ENCODE measurements at regions of chr11 and their contacts with region 1.

Region 1: DNA sequence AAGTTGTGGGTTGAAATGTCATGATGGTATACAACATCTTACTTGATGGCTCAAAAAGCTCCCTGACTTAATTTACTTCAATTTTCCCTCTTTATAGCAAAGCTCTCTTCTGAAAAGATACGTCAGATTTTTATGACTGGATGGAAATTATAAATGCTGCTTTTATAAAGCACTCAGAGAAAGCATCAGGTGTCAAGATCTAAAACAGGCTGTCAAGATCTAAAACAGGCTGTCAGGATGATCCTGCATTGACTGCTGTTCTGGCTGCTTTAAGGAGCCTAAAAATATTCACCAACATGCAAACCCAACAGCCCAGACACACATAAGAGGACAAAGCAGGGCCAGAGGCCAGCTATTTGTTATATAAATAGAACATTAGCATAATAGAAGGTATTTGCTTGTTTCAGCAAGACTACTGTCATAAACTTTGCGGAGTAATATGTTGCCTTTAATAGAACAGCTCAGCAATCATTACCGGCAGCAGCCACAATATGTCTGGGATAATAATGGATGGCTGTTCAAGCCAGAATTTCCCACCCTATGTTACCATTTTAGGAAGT is 77.3 kb upstream of the ANO5 start:
- DNase-seq: no peak
- ATAC-seq: no peak
- H3K4me3 ChIP-seq: no peak overlapping the region
- H3K27ac ChIP-seq: no peak overlapping the region
- H3K4me1 ChIP-seq: no peaks in the 10 kb centered on the region
- H3K27me3 ChIP-seq: no peaks in the 10 kb centered on the region

Region 2: DNA sequence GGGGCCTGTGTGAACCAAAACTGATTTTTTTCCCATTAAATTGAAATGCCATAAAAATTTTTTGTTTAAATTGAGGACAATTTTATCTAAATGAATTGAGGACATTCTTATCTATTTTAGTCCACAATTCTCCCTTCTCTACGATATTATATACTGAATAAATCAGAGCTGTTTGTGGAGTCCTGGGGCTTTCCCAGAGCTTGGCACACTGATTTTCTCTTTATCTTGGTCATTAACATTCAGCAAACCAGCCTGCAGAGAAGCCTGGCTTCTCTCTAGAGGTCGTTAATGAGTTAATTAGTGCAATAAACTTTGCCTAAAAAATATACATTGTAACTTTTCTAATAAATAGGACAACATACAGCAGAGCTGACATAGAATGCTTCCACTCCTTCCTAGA is 830.4 kb before region 1 on chr11:
- intact Hi-C with region 1: no loop called
- DNase-seq: no peak
- ATAC-seq: no peak
- H3K4me3 ChIP-seq: no peak overlapping the region
- H3K27ac ChIP-seq: no peak overlapping the region
- H3K4me1 ChIP-seq: no peaks in the 10 kb centered on the region
- H3K27me3 ChIP-seq: no peaks in the 10 kb centered on the region

Region 3: GRCh38 chr11:22151649-22152197 is 36.2 kb after region 1 on chr11:
- intact Hi-C with region 1: loop called in 1 of 2 experiments (anchors 2 kb)
- DNase-seq: no peak
- ATAC-seq: no peak
- H3K4me3 ChIP-seq: no peak overlapping the region
- H3K27ac ChIP-seq: no peak overlapping the region
- H3K4me1 ChIP-seq: no peaks in the 10 kb centered on the region
- H3K27me3 ChIP-seq: no peaks in the 10 kb centered on the region

Measured in aorta (tissue), 5 donors.